ENCODE measurements at regions of chr9 and their contacts with region 1.

Region 1: DNA sequence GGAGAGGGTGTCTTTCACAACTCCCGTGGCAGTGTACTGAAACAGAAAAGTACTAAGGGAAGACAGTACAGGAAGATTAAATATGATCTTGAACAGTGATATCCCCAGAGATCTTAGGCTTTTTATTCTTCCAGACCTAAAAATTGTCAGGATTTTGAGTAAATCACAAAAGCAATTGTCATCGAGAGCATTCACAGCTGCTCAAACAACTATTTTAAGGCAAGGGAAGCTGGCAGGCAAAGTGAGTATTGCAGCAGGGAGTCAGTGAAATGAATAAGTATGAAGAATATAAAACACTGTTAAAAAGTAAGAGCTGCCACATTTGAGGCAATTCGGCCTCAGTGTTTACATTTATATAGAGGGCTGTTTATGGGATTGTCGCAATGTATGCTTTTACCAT is 479.0 kb downstream of the CAAP1 start:
- DNase-seq: no peak
- H3K4me3 ChIP-seq: no peak overlapping the region
- H3K27ac ChIP-seq: no peak overlapping the region
- H3K4me1 ChIP-seq: no peaks in the 10 kb centered on the region
- H3K27me3 ChIP-seq: no peaks in the 10 kb centered on the region
- CTCF ChIP-seq: no peak

Region 2: DNA sequence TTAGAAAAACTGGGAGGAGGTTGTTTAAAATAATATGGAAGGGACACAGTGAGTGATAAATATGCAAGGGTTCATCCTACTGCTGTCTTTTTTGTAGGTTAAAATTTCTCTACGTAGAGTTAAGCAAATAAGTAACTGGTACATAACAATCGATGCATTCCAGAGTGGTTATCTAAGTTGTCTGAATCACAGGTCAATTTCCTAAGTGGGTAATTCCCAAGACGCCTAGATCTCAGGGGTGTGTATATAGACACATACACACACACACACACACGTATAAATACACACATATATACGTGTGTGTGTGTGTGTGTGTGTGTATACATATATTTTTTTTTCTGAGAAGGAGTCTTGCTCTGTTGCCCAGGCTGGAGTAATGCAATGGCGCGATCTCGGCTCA is 456.7 kb after region 1 on chr9:
- intact Hi-C with region 1: loop called (anchors 10 kb)
- DNase-seq: no peak
- H3K4me3 ChIP-seq: no peak overlapping the region
- H3K27ac ChIP-seq: no peak overlapping the region
- H3K4me1 ChIP-seq: no peaks in the 10 kb centered on the region
- H3K27me3 ChIP-seq: no peaks in the 10 kb centered on the region
- CTCF ChIP-seq: no peak

Measured in ascending aorta (tissue), 2 donors.